ENCODE measurements at regions of chr1 and their contacts with region 1.

Region 1: GRCh38 chr1:89085781-89086180 is 20.8 kb upstream of the GBP1 start:
- DNase-seq: peak in 1 of 3 donors; percentile 73
- ATAC-seq: no peak
- H3K4me3 ChIP-seq: no peak overlapping the region
- H3K4me1 ChIP-seq: no peaks in the 10 kb centered on the region
- CTCF ChIP-seq: peak; percentile 49

Region 2: DNA sequence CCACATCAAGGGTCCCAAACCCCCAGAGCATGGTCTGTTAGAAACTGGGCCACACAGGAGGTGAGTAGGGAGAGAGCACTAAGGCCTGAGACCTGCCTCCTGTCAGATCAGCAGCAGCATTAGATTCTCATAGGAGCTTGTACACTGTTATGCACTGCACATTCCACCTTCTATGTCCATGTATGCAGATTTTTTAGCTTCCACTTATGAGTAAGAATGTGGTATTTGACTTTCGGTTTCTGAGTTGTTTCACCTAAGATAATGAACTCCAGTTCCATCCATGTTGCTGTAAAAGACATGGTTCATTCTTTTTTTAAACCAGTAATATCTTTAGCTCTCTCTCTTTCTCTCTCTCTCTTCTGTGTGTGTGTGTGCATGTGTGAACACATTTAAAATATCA is 277.4 kb after region 1 on chr1:
- intact Hi-C with region 1: loop called in 1 of 2 experiments (anchors 10 kb)
- DNase-seq: no peak
- ATAC-seq: peak; percentile 13
- H3K4me3 ChIP-seq: no peak overlapping the region
- H3K4me1 ChIP-seq: peaks cover 2% of the 10 kb centered on the region
- CTCF ChIP-seq: no peak